ENCODE measurements at regions of chr16 and their contacts with region 1.

Region 1: DNA sequence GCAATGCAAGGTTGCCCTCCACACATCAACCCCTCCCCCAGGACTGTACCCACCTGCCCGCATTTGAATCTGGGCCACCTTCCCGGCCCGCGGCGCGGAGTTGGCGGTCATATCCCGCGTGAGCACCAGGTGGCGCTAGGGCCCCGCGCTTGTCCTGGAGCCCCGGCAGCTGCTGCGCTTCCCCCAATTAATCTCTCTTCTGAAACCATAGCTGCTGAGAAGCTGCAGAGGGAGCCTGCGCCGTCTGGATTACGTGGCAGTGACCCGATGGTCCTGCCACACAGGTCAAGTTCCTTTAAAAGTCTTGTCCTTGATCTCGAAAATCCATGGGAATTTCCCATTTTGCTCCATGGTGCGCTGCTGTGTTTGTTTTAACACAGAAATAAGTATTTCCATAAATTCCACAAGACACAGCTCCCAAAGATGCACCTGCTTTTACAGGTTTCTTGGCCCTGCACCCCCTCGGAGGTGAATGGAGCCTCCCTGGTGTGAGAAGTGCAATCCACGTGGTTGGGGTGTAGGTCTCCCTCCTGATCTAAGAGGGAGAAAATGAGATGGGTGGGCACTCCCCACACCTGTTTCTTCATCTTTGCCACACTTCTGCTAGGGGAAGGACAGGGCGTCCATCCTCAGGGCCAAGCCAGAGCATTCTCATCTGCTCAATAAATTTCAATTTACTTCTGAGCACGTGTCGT is 22.1 kb downstream of the COX4I1 start:
- DNase-seq: peak; percentile 62 to 84 (median 70)
- H3K4me3 ChIP-seq: no peak overlapping the region
- H3K27ac ChIP-seq: no peak overlapping the region
- H3K27me3 ChIP-seq: peaks cover 0 to 31% (median 8%) of the 10 kb centered on the region in 45 donors
- CTCF ChIP-seq: peak; percentile 90 to 100 (median 99)

Region 2: GRCh38 chr16:85935974-85936760 is 114.6 kb after region 1 on chr16:
- intact Hi-C with region 1: no loop called
- DNase-seq: peak in 1 of 10 donors; percentile 23
- H3K4me3 ChIP-seq: no peak overlapping the region
- H3K27ac ChIP-seq: no peak overlapping the region
- H3K27me3 ChIP-seq: peaks cover 0 to 26% (median 2%) of the 10 kb centered on the region in 45 donors
- CTCF ChIP-seq: no peak

Region 3: GRCh38 chr16:85986931-85987749 is 165.6 kb after region 1 on chr16:
- intact Hi-C with region 1: loop called (anchors 10 kb)
- DNase-seq: no peak
- H3K4me3 ChIP-seq: peak overlapping the region in 28 of 59 donors; percentile 4 to 60 (median 21)
- H3K27ac ChIP-seq: no peak overlapping the region
- H3K27me3 ChIP-seq: peaks cover 0 to 51% (median 12%) of the 10 kb centered on the region in 45 donors
- CTCF ChIP-seq: peak in 50 of 56 donors; percentile 16 to 69 (median 42)

Region 4: DNA sequence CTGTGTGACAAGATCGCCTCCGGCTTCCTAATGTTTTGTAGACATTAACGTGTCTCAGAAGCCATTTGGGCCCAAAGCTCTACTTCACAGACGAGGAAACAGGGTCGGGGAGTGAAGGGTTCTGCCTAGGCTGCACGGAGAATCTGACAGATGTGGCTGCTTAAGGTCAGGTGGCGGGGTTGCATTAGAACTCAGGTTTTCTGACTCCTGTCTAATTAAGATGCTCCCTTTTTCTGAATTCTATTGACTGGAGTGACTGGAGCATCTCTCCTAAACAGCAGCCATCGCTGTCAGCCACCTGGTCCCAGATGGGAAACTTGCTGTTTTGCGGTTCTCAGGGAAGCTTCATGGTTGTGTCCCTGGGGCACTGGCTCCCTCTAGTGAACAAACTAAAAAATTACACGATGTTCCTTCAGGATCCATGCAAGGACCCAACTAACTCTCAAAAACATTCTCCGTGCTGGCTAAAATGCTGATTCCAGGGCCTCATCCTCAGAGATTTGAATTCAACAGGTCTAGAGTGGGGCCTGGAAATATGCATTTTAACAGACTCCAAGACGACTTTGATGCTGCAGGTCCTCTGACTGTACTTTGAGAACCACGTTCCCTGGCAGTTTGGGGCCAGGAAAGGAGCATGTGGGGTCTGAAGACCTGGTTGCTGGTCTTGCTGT is 194.7 kb after region 1 on chr16:
- intact Hi-C with region 1: loop called (anchors 1 to 2 kb)
- DNase-seq: peak in 4 of 10 donors; percentile 45 to 49 (median 48)
- H3K4me3 ChIP-seq: no peak overlapping the region
- H3K27ac ChIP-seq: no peak overlapping the region
- H3K27me3 ChIP-seq: peaks cover 0 to 30% (median 2%) of the 10 kb centered on the region in 45 donors
- CTCF ChIP-seq: peak; percentile 50 to 90 (median 81)